Endothelial cell of umbilical vein (primary cell): ENCODE measurements at regions of chr7 and their contacts with region 1.

Region 1: GRCh38 chr7:107150375-107151073 is 18.3 kb upstream of the HBP1 start:
- DNase-seq: peak; percentile 89
- H3K4me3 ChIP-seq: no peak overlapping the region
- H3K27ac ChIP-seq: peak overlapping the region; percentile 20
- H3K4me1 ChIP-seq: peaks cover 13% of the 10 kb centered on the region
- H3K27me3 ChIP-seq: no peaks in the 10 kb centered on the region
- CTCF ChIP-seq: peak; percentile 28 to 35
- POLR2A ChIP-seq: no peak

Region 2: GRCh38 chr7:107044347-107045194 is 106.0 kb before region 1 on chr7 and contains the start of gene PRKAR2B:
- CTCF ChIA-PET with region 1: interaction called, 37 read pairs
- POLR2A ChIA-PET with region 1: no interaction called
- dilution Hi-C with region 1: no loop called
- intact Hi-C with region 1: loop called (anchors 1 kb)
- DNase-seq: peak; percentile 83
- H3K4me3 ChIP-seq: peak within 1 kb of the TSS; percentile 95 to 97 (median 95)
- H3K27ac ChIP-seq: peak within 1 kb of the TSS; percentile 22
- H3K4me1 ChIP-seq: peaks cover 44% of the 10 kb centered on the region
- H3K27me3 ChIP-seq: no peaks in the 10 kb centered on the region
- CTCF ChIP-seq: peak in 1 of 2 donors; percentile 18
- POLR2A ChIP-seq: peak; percentile 58
- total RNA-seq, gene PRKAR2B: 37.6 and 39.8 TPM in 2 replicates

Region 3: GRCh38 chr7:107122486-107122911 is 28.0 kb before region 1 on chr7:
- CTCF ChIA-PET with region 1: interaction called, 14 read pairs
- POLR2A ChIA-PET with region 1: no interaction called
- dilution Hi-C with region 1: no loop called
- intact Hi-C with region 1: no loop called
- DNase-seq: no peak
- H3K4me3 ChIP-seq: no peak overlapping the region
- H3K27ac ChIP-seq: no peak overlapping the region
- H3K4me1 ChIP-seq: peaks cover 9% of the 10 kb centered on the region
- H3K27me3 ChIP-seq: no peaks in the 10 kb centered on the region
- CTCF ChIP-seq: no peak
- POLR2A ChIP-seq: no peak

Region 4: DNA sequence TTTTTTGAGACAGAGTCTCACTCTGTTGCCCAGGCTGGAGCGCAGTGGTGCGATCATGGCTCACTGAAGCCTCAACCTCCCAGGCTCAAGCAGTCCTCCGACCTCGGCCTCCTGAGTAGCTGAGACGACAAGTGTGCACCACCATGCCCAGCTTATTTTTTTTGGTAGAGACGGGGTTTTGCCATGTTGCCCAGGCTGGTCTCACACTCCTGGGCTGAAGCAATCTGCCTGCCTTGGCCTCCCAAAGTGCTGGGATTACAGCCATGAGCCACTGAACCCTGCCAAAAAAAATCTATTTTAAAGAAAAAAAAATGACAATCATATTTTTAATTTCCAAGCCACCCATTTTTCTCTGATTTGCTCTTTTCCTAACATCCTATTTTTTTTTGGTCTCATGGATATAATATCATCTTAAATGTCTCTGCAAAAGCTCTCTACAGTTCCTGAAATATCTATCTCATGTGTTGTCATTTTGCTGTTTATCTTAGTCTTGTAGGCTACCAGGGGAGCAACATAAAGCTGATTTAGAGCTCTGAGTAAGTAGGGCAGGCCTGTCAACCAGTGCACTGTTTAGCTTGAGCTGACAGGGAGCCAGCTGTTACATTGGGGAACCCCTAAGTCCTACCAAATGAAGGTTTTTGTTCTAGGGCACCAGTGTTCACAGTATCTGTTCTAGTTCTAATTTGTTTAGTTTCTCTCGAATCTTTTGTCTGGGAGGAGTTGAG is 11.7 kb before region 1 on chr7:
- CTCF ChIA-PET with region 1: interaction called, 16 read pairs
- POLR2A ChIA-PET with region 1: no interaction called
- dilution Hi-C with region 1: no loop called
- intact Hi-C with region 1: no loop called
- DNase-seq: no peak
- H3K4me3 ChIP-seq: no peak overlapping the region
- H3K27ac ChIP-seq: no peak overlapping the region
- H3K4me1 ChIP-seq: no peaks in the 10 kb centered on the region
- H3K27me3 ChIP-seq: no peaks in the 10 kb centered on the region
- CTCF ChIP-seq: no peak
- POLR2A ChIP-seq: no peak

Region 5: GRCh38 chr7:107168233-107169119 is 18.0 kb after region 1 on chr7 and contains the start of gene HBP1:
- CTCF ChIA-PET with region 1: interaction called, 21 read pairs
- POLR2A ChIA-PET with region 1: interaction called, 5 read pairs
- dilution Hi-C with region 1: no loop called
- intact Hi-C with region 1: no loop called
- DNase-seq: peak; percentile 100
- H3K4me3 ChIP-seq: peak within 1 kb of the TSS; percentile 81 to 97 (median 93)
- H3K27ac ChIP-seq: peak within 1 kb of the TSS; percentile 92
- H3K4me1 ChIP-seq: peaks cover 40% of the 10 kb centered on the region
- H3K27me3 ChIP-seq: no peaks in the 10 kb centered on the region
- CTCF ChIP-seq: no peak
- POLR2A ChIP-seq: peak; percentile 53
- total RNA-seq, gene HBP1: 50.1 and 63.4 TPM in 2 replicates

Region 6: GRCh38 chr7:107441581-107442422 is 291.3 kb after region 1 on chr7:
- CTCF ChIA-PET with region 1: no interaction called
- POLR2A ChIA-PET with region 1: no interaction called
- dilution Hi-C with region 1: no loop called
- intact Hi-C with region 1: no loop called
- DNase-seq: no peak
- H3K4me3 ChIP-seq: no peak overlapping the region
- H3K27ac ChIP-seq: no peak overlapping the region
- H3K4me1 ChIP-seq: no peaks in the 10 kb centered on the region
- H3K27me3 ChIP-seq: no peaks in the 10 kb centered on the region
- CTCF ChIP-seq: no peak
- POLR2A ChIP-seq: no peak

Region 7: DNA sequence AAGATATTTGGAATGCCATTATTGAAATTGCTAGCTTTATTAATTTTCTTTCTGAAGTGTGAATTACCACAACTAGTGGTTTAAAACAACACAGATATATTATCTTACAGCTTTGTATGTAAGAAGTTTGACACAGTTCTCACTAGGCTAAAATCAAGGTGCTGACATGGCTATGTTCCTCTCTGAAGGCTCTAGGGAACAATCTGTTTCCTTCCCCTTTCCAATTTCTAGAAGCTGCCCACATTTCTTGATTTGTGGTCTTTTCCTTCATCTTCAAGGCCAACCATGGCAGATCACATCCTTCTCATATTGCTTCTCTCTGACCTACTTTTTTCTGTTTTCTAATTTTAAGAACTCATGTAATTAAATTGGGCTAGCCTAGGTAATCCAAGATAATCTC is 695.8 kb after region 1 on chr7:
- CTCF ChIA-PET with region 1: no interaction called
- POLR2A ChIA-PET with region 1: no interaction called
- dilution Hi-C with region 1: no loop called
- intact Hi-C with region 1: no loop called
- DNase-seq: no peak
- H3K4me3 ChIP-seq: no peak overlapping the region
- H3K27ac ChIP-seq: no peak overlapping the region
- H3K4me1 ChIP-seq: no peaks in the 10 kb centered on the region
- H3K27me3 ChIP-seq: peaks cover 2 to 13% of the 10 kb centered on the region in 2 experiments
- CTCF ChIP-seq: no peak
- POLR2A ChIP-seq: no peak